Activated B cell treated with CpG ODN at 0.5 μM for 24 hours (primary cell): ENCODE measurements at regions of chr19 and their contacts with region 1.

Region 1: GRCh38 chr19:7535035-7535992 is at the start of gene PNPLA6:
- DNase-seq: peak; percentile 95
- ATAC-seq: peak; percentile 75
- H3K4me3 Mint-ChIP-seq: peak within 1 kb of the TSS; percentile 94
- H3K27ac Mint-ChIP-seq: peak within 1 kb of the TSS; percentile 91
- H3K4me1 Mint-ChIP-seq: peaks cover 32% of the 10 kb centered on the region
- H3K27me3 Mint-ChIP-seq: no peaks in the 10 kb centered on the region
- CTCF ChIP-seq: no peak
- total RNA-seq, gene PNPLA6: 110 and 116 TPM in 2 replicates

Region 2: GRCh38 chr19:5904352-5905113 is 1630.8 kb before region 1 on chr19 and contains the start of gene VMAC:
- CTCF ChIA-PET with region 1: no interaction called
- POLR2A ChIA-PET with region 1: no interaction called
- intact Hi-C with region 1: loop called (anchors 10 kb)
- DNase-seq: peak; percentile 100
- ATAC-seq: peak; percentile 78
- H3K4me3 Mint-ChIP-seq: peak within 1 kb of the TSS; percentile 95
- H3K27ac Mint-ChIP-seq: peak within 1 kb of the TSS; percentile 98
- H3K4me1 Mint-ChIP-seq: peaks cover 38% of the 10 kb centered on the region
- H3K27me3 Mint-ChIP-seq: no peaks in the 10 kb centered on the region
- CTCF ChIP-seq: no peak
- total RNA-seq, gene VMAC: 11.2 and 13.3 TPM in 2 replicates

Region 3: GRCh38 chr19:7515645-7516151 is 19.6 kb before region 1 on chr19 and contains the start of gene ZNF358:
- CTCF ChIA-PET with region 1: no interaction called
- POLR2A ChIA-PET with region 1: interaction called, 37 read pairs
- intact Hi-C with region 1: loop called (anchors 2 kb)
- DNase-seq: peak; percentile 56
- ATAC-seq: peak; percentile 98
- H3K4me3 Mint-ChIP-seq: peak within 1 kb of the TSS; percentile 76
- H3K27ac Mint-ChIP-seq: peak within 1 kb of the TSS; percentile 79
- H3K4me1 Mint-ChIP-seq: peaks cover 12% of the 10 kb centered on the region
- H3K27me3 Mint-ChIP-seq: peaks cover 6% of the 10 kb centered on the region
- CTCF ChIP-seq: no peak
- total RNA-seq, gene ZNF358: 13.5 and 16.9 TPM in 2 replicates

Region 4: GRCh38 chr19:7550987-7551761 is 15.9 kb after region 1 on chr19:
- CTCF ChIA-PET with region 1: no interaction called
- POLR2A ChIA-PET with region 1: interaction called, 3 read pairs
- intact Hi-C with region 1: loop called (anchors 1 kb)
- DNase-seq: peak; percentile 22
- ATAC-seq: peak; percentile 81
- H3K4me3 Mint-ChIP-seq: no peak overlapping the region
- H3K27ac Mint-ChIP-seq: no peak overlapping the region
- H3K4me1 Mint-ChIP-seq: peaks cover 3% of the 10 kb centered on the region
- H3K27me3 Mint-ChIP-seq: no peaks in the 10 kb centered on the region
- CTCF ChIP-seq: no peak

Region 5: DNA sequence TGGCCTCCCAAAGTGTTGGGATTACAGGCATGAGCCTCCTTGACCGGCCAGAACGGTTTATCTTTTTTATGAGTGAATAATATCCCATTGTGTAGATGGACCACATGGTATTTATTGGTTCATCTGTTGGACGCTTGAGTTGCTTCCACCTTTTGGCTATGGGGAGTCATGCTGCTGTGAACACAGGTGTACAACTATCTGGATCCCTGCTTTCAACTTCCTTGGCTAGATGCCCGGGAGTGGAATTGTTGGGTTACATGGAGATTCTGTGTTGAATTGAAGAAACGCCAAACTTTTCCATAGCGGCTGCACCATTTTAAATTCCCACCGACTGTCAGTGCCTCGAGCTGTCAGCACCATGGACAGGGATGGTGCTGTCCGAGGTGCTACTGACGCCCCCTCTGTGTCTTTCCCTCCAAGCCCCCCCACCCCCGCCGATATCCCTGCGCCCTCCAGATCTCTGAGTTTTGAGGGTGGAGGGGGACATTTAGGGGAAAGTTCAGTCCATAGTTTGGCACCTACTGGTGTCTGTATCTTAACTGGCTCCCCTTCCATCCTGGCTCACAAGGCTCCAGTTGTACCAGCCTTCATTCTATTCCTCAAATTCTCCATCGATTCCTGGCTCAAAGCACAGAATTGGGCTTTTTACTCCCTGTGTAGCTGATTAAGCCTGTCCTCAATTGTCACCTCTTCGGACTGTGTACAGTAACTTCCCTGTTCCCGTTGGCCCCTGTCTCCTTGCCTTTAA is 27.5 kb after region 1 on chr19:
- CTCF ChIA-PET with region 1: no interaction called
- POLR2A ChIA-PET with region 1: no interaction called
- intact Hi-C with region 1: no loop called
- DNase-seq: no peak
- ATAC-seq: no peak
- H3K4me3 Mint-ChIP-seq: no peak overlapping the region
- H3K27ac Mint-ChIP-seq: no peak overlapping the region
- H3K4me1 Mint-ChIP-seq: no peaks in the 10 kb centered on the region
- H3K27me3 Mint-ChIP-seq: no peaks in the 10 kb centered on the region
- CTCF ChIP-seq: no peak

Region 6: GRCh38 chr19:7575434-7576040 is 40.2 kb after region 1 on chr19:
- CTCF ChIA-PET with region 1: no interaction called
- POLR2A ChIA-PET with region 1: no interaction called
- intact Hi-C with region 1: no loop called
- DNase-seq: no peak
- ATAC-seq: no peak
- H3K4me3 Mint-ChIP-seq: no peak overlapping the region
- H3K27ac Mint-ChIP-seq: no peak overlapping the region
- H3K4me1 Mint-ChIP-seq: no peaks in the 10 kb centered on the region
- H3K27me3 Mint-ChIP-seq: peaks cover 5% of the 10 kb centered on the region
- CTCF ChIP-seq: no peak

Region 7: DNA sequence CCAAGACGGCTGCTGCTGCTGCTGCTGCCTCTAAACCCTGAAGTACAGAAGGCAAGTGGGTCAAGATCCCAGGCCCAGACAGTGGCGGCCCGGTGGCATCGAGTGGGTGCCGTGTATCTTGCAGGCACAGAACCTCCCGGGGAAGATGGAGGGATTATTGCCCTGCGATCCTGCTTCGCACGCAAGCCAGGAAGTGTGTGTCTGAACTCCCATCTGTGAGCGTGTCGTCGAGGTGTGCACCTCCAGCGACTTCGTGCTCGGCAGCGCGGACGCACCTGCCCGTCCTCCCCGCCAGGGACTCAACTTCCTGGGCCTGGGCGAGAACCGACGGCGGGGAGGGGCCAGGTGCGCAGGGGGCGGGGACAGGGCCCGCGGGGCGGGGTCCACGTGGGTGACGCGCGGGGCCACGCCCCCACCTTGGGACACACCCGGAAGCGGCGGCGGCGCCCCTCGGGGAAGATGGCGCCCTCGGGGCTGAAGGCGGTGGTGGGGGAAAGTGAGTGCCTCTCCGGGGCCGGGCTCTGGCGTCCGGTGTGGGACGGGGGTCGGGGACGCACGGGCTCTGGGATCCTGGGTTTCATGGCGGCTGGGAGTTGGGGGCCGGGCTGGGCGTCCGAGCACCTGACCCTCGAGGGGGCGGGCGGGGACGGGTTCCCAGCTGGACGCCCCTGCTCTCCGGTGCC is 101.5 kb after region 1 on chr19 and contains the start of gene STXBP2:
- CTCF ChIA-PET with region 1: no interaction called
- POLR2A ChIA-PET with region 1: no interaction called
- intact Hi-C with region 1: loop called (anchors 2 kb)
- DNase-seq: peak; percentile 93
- ATAC-seq: peak; percentile 98
- H3K4me3 Mint-ChIP-seq: peak within 1 kb of the TSS; percentile 86
- H3K27ac Mint-ChIP-seq: peak within 1 kb of the TSS; percentile 90
- H3K4me1 Mint-ChIP-seq: peaks cover 36% of the 10 kb centered on the region
- H3K27me3 Mint-ChIP-seq: no peaks in the 10 kb centered on the region
- CTCF ChIP-seq: no peak
- total RNA-seq, gene STXBP2: 147 and 176 TPM in 2 replicates